ENCODE measurements at regions of chr16 and their contacts with region 1.

Region 1: DNA sequence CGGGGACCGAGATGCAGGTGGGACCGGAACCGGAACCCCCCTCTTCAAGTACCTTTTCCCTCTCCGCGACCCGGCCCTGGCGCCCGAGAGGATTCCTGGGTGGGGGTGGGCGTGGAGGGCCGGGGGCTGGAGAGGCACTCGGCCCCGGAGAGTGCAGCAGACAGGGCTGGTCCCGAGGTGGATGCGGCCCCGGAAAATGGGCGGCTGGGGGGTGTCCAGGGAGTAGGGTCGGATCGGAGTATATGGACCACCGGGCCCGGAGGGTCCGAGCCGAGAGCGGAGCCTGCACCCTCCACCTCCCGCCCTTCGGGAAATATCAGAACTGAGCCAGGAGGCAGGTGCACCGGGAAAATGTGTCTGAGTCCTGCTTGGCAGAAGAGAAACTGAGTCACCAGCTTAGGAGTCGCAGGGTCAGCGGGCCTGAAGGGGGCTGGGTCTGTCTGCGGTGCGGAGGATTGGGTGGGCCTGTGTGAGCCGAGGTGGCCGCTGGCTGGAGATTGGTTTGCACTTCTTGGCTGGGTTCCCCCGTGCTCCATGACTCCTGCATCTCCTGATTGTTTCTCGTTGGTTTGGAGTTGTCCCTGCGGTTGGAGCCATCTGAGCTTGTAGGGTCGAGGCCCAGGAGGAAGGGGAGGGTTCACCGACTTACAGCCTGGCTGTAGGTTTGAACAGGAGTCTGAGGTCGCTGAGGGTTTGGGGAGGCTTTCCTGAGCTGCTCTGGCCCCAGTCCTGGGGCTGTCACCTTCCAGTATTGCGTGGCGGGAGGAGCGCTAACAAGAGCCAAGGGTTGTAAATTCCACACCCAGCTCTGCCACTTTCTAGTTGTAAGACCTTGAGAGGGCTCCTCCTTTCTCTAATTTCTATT is 518 bp downstream of the SH2B1 start:
- DNase-seq: peak; percentile 38
- H3K4me3 Mint-ChIP-seq: peak overlapping the region; percentile 94
- H3K27ac Mint-ChIP-seq: peak overlapping the region; percentile 98
- H3K4me1 Mint-ChIP-seq: peaks cover 24% of the 10 kb centered on the region
- H3K27me3 Mint-ChIP-seq: no peaks in the 10 kb centered on the region

Region 2: GRCh38 chr16:28823872-28824716 is 40.1 kb before region 1 on chr16:
- CTCF ChIA-PET with region 1: no interaction called
- POLR2A ChIA-PET with region 1: interaction called, 23 read pairs
- intact Hi-C with region 1: loop called (anchors 1 kb)
- DNase-seq: peak; percentile 98
- H3K4me3 Mint-ChIP-seq: peak overlapping the region; percentile 94
- H3K27ac Mint-ChIP-seq: peak overlapping the region; percentile 99
- H3K4me1 Mint-ChIP-seq: peaks cover 39% of the 10 kb centered on the region
- H3K27me3 Mint-ChIP-seq: no peaks in the 10 kb centered on the region

Region 3: DNA sequence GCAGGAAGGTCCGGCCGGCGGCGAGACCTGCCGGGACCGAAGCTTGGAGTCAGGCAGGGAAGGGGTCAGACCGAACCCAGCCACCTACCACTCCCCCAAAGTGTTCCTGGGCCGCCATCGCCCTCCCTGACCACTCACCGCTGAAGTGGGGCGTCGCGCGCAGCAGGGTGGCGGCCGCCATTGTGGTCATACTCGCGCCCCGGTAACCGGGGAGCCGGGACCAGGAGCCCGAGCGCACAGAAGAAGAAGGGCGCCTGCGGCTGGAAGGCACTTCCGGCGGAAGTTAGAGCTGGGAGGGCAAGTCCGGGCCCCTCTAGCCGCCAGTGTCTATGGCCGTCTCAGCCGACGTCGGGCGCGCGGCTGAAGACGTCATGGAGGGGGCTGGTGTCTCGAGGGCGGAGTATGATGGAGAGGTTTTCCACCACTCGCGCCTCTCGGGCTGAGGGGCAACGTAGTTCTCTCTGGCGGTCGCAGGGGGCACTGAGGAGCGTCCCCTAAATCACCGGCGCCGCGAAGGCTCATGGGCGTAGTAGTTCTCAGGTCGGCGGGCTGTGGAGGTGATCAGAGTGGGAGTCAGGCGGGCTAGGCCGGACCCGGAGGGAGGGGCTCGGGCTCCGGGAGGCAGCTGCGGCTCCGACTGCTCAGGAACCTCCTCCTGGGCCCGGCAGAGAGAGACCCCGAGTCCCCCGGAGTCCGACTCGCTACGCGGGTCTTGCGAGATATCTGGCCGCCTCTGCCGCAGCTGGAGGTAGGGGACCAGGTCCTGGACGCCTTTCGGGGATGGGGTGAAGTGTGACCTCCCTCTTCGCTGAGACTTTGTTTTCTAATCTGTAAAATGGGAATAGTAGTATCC is 17.9 kb before region 1 on chr16 and contains the start of gene TUFM:
- CTCF ChIA-PET with region 1: interaction called, 10 read pairs
- POLR2A ChIA-PET with region 1: interaction called, 55 read pairs
- intact Hi-C with region 1: loop called (anchors 1 kb)
- DNase-seq: peak; percentile 99
- H3K4me3 Mint-ChIP-seq: peak within 1 kb of the TSS; percentile 89
- H3K27ac Mint-ChIP-seq: peak within 1 kb of the TSS; percentile 94
- H3K4me1 Mint-ChIP-seq: peaks cover 24% of the 10 kb centered on the region
- H3K27me3 Mint-ChIP-seq: no peaks in the 10 kb centered on the region
- total RNA-seq, gene TUFM: 221 TPM

Region 4: DNA sequence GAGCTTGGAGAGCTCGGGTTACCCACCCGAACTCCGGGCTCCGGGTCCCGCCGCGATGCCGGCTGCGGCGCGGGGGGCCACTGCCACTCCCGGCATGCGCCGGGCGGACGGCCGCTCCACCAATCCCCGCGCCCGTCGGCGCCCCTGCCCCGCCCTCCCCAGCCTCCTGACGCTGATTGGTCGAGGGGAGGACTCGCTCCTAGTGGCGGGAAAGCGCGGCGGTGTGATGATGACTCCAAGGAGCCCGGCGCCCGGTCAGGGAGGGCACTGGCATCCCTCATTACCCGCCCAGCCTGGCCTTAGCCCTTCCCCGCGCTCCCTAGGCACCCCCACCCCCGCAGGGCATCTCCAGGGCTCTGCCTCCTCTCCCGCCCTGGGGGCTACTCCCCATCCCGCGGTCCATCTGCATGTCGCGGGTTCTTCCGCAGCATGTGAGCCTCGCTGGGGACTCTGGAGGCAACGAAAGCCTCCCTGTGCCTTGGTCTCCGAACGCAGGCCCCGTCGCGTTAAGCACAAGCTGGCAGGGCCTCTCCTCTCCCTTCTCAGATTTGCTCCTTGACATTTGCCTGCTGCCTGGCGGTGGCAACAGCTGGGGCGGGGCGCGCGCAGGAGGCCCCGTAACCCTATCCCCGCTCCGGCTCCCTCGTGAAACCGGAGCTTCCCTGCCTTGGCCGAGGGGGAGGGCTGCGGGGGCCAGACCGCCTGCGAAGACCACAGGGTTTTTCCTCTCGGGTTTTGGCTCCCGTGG is 15.9 kb after region 1 on chr16:
- CTCF ChIA-PET with region 1: interaction called, 30 read pairs
- POLR2A ChIA-PET with region 1: interaction called, 7 read pairs
- intact Hi-C with region 1: loop called (anchors 2 kb)
- DNase-seq: peak; percentile 96
- H3K4me3 Mint-ChIP-seq: peak overlapping the region; percentile 88
- H3K27ac Mint-ChIP-seq: peak overlapping the region; percentile 13
- H3K4me1 Mint-ChIP-seq: peaks cover 20% of the 10 kb centered on the region
- H3K27me3 Mint-ChIP-seq: peaks cover 7% of the 10 kb centered on the region

Region 5: DNA sequence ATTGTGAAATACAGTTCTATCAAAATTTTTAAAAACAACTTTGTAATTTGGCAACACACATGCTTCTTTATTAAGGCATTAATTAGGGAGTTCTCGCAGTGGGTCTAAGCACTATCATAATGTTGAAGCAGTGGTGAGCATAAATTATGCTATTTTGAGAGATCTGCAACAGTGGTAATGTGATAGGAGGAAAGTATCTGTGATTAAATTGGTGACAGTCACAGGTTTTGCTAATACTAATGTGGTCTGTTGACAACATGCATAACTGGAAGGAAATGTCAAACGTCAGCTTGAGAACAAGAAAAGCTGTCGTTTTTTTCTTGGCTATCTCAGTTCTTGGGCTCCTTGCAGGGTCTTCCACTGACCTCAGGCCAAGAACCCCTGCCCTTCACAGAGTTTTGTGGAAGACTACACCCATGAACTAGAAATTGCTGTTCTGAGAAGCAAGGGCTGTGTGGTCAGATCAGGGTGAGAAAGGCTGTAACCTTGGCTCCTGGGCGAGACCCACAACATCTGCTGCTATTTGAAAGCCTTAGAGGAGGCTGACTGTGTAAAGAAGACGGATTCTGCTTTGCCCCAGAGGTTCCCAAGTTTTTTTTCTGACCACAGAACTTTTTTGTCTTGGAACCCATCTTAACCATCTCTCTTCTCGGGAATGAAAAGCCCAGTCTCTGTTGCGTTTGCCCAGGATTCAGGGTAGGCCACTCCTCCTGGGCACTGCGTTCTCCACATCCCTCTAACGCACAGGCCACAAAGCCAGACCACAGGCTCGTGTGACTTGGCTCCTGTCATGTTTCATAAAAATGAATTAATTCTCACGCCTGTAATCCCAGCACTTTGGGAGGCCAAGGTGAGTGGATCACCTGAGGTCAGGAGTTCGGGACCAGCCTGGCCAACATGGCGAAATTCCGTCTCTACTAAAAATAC is 28.1 kb after region 1 on chr16:
- CTCF ChIA-PET with region 1: no interaction called
- POLR2A ChIA-PET with region 1: no interaction called
- intact Hi-C with region 1: no loop called
- DNase-seq: no peak
- H3K4me3 Mint-ChIP-seq: no peak overlapping the region
- H3K27ac Mint-ChIP-seq: no peak overlapping the region
- H3K4me1 Mint-ChIP-seq: no peaks in the 10 kb centered on the region
- H3K27me3 Mint-ChIP-seq: no peaks in the 10 kb centered on the region

Region 6: GRCh38 chr16:28924732-28925385 is 60.7 kb after region 1 on chr16 and contains the start of gene RABEP2:
- CTCF ChIA-PET with region 1: no interaction called
- POLR2A ChIA-PET with region 1: interaction called, 9 read pairs
- intact Hi-C with region 1: loop called (anchors 5 kb)
- DNase-seq: peak; percentile 97
- H3K4me3 Mint-ChIP-seq: peak within 1 kb of the TSS; percentile 94
- H3K27ac Mint-ChIP-seq: peak within 1 kb of the TSS; percentile 98
- H3K4me1 Mint-ChIP-seq: peaks cover 9% of the 10 kb centered on the region
- H3K27me3 Mint-ChIP-seq: no peaks in the 10 kb centered on the region
- total RNA-seq, gene RABEP2: 11.3 to 12.0 TPM

Region 7: DNA sequence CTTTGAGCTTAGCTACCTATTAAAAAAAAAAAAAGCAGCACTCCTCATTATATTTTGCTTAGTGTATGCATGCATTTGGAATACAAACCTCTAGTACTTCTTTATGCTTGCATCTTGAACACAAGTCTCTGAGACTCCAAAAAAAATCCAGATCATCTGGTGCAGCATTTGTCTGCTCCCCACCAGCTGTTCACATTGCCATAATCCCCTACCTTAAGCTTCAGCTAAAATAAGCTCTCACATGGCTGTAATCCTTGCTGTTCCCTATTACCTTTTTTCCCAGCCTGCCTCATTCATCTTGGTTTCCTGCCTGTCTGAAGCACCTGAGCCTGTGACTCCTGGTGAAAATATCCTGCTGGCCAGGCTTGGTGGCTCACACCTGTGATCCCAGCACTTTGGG is 79.1 kb after region 1 on chr16:
- CTCF ChIA-PET with region 1: interaction called, 29 read pairs
- POLR2A ChIA-PET with region 1: no interaction called
- intact Hi-C with region 1: no loop called
- DNase-seq: no peak
- H3K4me3 Mint-ChIP-seq: no peak overlapping the region
- H3K27ac Mint-ChIP-seq: no peak overlapping the region
- H3K4me1 Mint-ChIP-seq: peaks cover 5% of the 10 kb centered on the region
- H3K27me3 Mint-ChIP-seq: no peaks in the 10 kb centered on the region

Region 8: DNA sequence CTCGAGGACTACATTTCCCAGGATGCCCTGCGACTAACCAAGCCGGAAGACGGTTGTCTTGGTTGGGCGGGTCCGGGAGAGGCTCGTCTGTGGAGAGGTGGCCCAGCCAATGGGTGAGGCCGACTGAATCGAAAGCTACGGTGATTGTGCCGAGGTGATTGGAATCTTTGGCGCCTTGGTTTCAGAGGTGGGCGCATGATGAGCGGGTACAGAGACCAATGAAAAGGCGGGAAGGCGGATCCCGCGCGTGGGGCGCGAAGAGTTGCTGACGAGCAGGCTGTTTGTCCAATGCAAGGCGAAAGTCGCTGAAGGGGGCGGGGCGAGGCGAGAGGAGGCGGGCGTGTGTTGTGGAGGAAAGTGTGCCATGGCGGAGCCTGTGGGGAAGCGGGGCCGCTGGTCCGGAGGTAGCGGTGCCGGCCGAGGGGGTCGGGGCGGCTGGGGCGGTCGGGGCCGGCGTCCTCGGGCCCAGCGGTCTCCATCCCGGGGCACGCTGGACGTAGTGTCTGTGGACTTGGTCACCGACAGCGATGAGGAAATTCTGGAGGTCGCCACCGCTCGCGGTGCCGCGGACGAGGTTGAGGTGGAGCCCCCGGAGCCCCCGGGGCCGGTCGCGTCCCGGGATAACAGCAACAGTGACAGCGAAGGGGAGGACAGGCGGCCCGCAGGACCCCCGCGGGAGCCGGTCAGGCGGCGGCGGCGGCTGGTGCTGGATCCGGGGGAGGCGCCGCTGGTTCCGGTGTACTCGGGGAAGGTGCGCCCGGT is 86.7 kb after region 1 on chr16 and contains the start of gene NFATC2IP:
- CTCF ChIA-PET with region 1: interaction called, 29 read pairs
- POLR2A ChIA-PET with region 1: no interaction called
- intact Hi-C with region 1: loop called (anchors 5 kb)
- DNase-seq: peak; percentile 100
- H3K4me3 Mint-ChIP-seq: peak within 1 kb of the TSS; percentile 95
- H3K27ac Mint-ChIP-seq: peak within 1 kb of the TSS; percentile 91
- H3K4me1 Mint-ChIP-seq: peaks cover 24% of the 10 kb centered on the region
- H3K27me3 Mint-ChIP-seq: no peaks in the 10 kb centered on the region
- total RNA-seq, gene NFATC2IP: 57.7 to 64.6 TPM